Activated B cell treated with CpG ODN at 0.5 μM for 24 hours (primary cell): ENCODE measurements at regions of chr3 and their contacts with region 1.

Region 1: GRCh38 chr3:142586803-142587406 is 8.4 kb upstream of the ATR start:
- DNase-seq: no peak
- ATAC-seq: peak; percentile 65
- H3K4me3 Mint-ChIP-seq: no peak overlapping the region
- H3K27ac Mint-ChIP-seq: no peak overlapping the region
- H3K4me1 Mint-ChIP-seq: no peaks in the 10 kb centered on the region
- H3K27me3 Mint-ChIP-seq: peaks cover 19% of the 10 kb centered on the region
- CTCF ChIP-seq: no peak

Region 2: GRCh38 chr3:142459929-142460328 is 127.0 kb before region 1 on chr3:
- CTCF ChIA-PET with region 1: no interaction called
- POLR2A ChIA-PET with region 1: no interaction called
- intact Hi-C with region 1: no loop called
- DNase-seq: no peak
- ATAC-seq: no peak
- H3K4me3 Mint-ChIP-seq: no peak overlapping the region
- H3K27ac Mint-ChIP-seq: no peak overlapping the region
- H3K4me1 Mint-ChIP-seq: no peaks in the 10 kb centered on the region
- H3K27me3 Mint-ChIP-seq: no peaks in the 10 kb centered on the region
- CTCF ChIP-seq: no peak

Region 3: DNA sequence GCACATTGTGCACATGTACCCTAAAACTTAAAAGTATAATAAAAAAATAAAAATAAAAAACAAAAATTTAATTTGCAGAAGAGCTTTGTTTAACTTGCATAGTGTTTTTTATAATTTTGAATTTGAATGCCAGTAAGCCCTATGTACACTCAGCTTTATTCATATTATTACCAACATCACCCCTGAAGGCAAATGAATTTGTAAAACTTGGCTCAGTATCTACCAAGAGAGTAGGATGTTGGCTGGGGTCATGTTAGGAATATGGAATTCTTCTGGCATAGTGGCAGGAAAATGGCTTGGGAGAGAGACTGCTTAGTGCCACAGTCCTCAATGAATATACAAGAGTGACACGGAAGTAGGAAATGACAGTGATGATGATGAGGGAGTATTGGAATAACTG is 167.6 kb after region 1 on chr3:
- CTCF ChIA-PET with region 1: no interaction called
- POLR2A ChIA-PET with region 1: no interaction called
- intact Hi-C with region 1: no loop called
- DNase-seq: no peak
- ATAC-seq: no peak
- H3K4me3 Mint-ChIP-seq: no peak overlapping the region
- H3K27ac Mint-ChIP-seq: no peak overlapping the region
- H3K4me1 Mint-ChIP-seq: no peaks in the 10 kb centered on the region
- H3K27me3 Mint-ChIP-seq: no peaks in the 10 kb centered on the region
- CTCF ChIP-seq: no peak

Region 4: GRCh38 chr3:142904639-142905436 is 317.9 kb after region 1 on chr3:
- CTCF ChIA-PET with region 1: no interaction called
- POLR2A ChIA-PET with region 1: no interaction called
- intact Hi-C with region 1: loop called (anchors 2 kb)
- DNase-seq: no peak
- ATAC-seq: peak; percentile 65
- H3K4me3 Mint-ChIP-seq: no peak overlapping the region
- H3K27ac Mint-ChIP-seq: no peak overlapping the region
- H3K4me1 Mint-ChIP-seq: peaks cover 8% of the 10 kb centered on the region
- H3K27me3 Mint-ChIP-seq: peaks cover 11% of the 10 kb centered on the region
- CTCF ChIP-seq: no peak

Region 5: DNA sequence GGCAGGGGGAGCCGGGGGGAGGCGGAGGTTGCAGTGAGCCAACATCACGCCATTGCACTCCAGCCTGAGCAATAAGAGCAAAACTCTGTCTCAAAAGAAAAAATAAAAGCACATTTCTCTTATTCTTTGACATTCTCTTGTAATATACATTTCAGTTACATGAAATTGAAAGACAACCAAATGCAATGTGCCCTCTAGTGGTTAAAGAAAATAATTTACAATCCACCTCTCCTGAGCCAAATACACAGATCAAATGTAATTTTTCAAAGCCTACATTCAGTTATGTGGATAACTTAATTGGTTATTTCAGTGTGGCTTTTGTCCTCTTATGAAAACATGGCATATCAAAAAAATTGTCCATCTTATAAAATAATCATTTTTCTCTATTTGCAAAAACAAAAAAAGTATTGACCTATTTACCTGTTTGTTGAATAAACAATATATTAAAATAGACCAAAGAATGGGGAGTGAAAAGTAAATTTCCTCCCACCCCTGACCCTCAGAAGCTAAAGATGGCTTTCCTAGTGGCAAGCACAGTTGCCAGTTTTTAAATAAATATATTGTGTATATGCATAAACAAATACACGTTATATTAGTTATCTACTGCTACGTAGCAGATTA is 400.3 kb after region 1 on chr3:
- CTCF ChIA-PET with region 1: interaction called, 3 read pairs
- POLR2A ChIA-PET with region 1: no interaction called
- intact Hi-C with region 1: loop called (anchors 1 kb)
- DNase-seq: no peak
- ATAC-seq: peak; percentile 25
- H3K4me3 Mint-ChIP-seq: no peak overlapping the region
- H3K27ac Mint-ChIP-seq: no peak overlapping the region
- H3K4me1 Mint-ChIP-seq: no peaks in the 10 kb centered on the region
- H3K27me3 Mint-ChIP-seq: no peaks in the 10 kb centered on the region
- CTCF ChIP-seq: peak; percentile 19

Region 6: GRCh38 chr3:142993958-142994442 is 407.1 kb after region 1 on chr3:
- CTCF ChIA-PET with region 1: no interaction called
- POLR2A ChIA-PET with region 1: no interaction called
- intact Hi-C with region 1: loop called (anchors 1 kb)
- DNase-seq: peak; percentile 25
- ATAC-seq: peak; percentile 54
- H3K4me3 Mint-ChIP-seq: no peak overlapping the region
- H3K27ac Mint-ChIP-seq: no peak overlapping the region
- H3K4me1 Mint-ChIP-seq: peaks cover 15% of the 10 kb centered on the region
- H3K27me3 Mint-ChIP-seq: no peaks in the 10 kb centered on the region
- CTCF ChIP-seq: no peak

Region 7: DNA sequence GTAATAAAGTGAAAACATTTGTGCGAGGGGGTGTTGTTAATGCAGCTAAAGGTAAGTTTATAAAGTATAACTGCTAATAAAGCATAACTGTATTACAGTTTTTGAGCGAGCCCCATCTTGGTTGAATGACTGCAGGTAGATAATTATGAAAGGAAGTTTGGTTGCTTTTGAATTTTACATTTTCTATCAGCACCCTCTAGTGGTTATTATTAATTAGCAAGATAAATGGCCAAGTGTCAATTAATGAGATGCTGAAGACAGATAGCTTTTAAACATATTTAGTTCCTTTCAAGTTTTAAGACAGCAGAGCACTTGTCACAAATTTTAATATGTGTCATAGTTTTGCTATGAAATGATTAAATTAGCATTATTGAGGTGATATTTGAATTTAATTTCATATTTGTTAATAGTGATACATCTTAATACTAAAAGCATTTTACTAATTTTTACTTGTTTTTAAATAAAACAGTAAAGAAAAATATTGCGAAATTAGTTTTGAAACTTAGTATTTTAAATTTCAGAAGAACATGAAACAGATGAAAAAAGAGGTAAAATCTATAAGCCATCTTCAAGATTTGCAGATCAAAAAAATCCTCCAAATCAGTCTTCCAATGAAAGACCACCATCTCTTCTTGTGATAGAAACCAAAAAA is 429.5 kb after region 1 on chr3:
- CTCF ChIA-PET with region 1: interaction called, 3 read pairs
- POLR2A ChIA-PET with region 1: no interaction called
- intact Hi-C with region 1: loop called (anchors 1 kb)
- DNase-seq: no peak
- ATAC-seq: no peak
- H3K4me3 Mint-ChIP-seq: no peak overlapping the region
- H3K27ac Mint-ChIP-seq: no peak overlapping the region
- H3K4me1 Mint-ChIP-seq: peaks cover 10% of the 10 kb centered on the region
- H3K27me3 Mint-ChIP-seq: no peaks in the 10 kb centered on the region
- CTCF ChIP-seq: peak; percentile 79

Region 8: DNA sequence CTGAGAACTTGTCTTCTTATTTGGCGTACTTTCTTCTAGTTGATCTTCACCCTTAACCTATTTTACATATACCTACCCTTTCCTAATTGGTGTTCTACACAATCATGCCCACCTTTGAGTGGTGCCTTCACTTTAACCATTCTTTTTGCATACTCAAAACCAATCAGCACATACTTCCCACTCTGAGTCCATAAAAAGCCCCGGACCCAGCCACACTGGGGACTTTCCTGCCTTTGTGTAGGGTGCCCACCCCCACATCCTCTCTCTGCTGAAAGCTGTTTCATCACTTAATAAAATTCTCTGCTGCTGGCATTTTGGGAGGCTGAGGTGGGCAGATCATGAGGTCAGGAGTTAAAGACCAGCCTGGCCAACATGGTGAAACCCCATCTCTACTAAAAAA is 516.7 kb after region 1 on chr3:
- CTCF ChIA-PET with region 1: no interaction called
- POLR2A ChIA-PET with region 1: no interaction called
- intact Hi-C with region 1: no loop called
- DNase-seq: no peak
- ATAC-seq: no peak
- H3K4me3 Mint-ChIP-seq: no peak overlapping the region
- H3K27ac Mint-ChIP-seq: no peak overlapping the region
- H3K4me1 Mint-ChIP-seq: peaks cover 3% of the 10 kb centered on the region
- H3K27me3 Mint-ChIP-seq: peaks cover 5% of the 10 kb centered on the region
- CTCF ChIP-seq: no peak

Region 9: DNA sequence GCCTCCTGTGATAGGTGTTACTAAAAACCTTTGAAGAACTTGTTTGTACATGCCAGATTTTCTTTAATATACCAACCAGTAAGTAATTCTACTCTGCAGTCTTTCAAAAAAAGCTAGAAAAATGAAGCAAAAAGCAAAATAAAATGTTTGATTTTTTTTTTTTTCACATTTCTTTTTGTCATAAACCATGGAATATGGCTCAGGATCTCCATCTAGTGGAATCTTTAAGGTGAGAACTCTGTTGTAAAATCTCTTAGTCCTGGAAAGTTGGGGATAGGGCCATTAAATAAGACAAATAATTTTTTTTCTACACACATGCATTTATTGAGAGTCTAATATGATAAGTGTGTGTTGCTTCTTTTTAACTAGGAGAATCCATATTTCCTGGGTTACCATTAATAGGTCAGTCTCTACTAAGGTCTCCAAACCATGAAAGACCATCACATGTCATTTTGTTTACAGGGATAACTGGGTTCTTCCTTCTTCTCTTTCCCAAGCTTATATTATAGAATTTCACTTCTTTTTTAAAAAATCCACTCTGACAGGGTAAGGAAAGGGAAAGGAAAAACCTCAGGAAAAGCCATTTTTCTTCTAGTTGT is 1176.8 kb after region 1 on chr3:
- CTCF ChIA-PET with region 1: no interaction called
- POLR2A ChIA-PET with region 1: no interaction called
- intact Hi-C with region 1: loop called (anchors 10 kb)
- DNase-seq: no peak
- ATAC-seq: no peak
- H3K4me3 Mint-ChIP-seq: no peak overlapping the region
- H3K27ac Mint-ChIP-seq: no peak overlapping the region
- H3K4me1 Mint-ChIP-seq: peaks cover 3% of the 10 kb centered on the region
- H3K27me3 Mint-ChIP-seq: no peaks in the 10 kb centered on the region
- CTCF ChIP-seq: no peak